ENCODE measurements at regions of chr3 and their contacts with region 1.

Region 1: DNA sequence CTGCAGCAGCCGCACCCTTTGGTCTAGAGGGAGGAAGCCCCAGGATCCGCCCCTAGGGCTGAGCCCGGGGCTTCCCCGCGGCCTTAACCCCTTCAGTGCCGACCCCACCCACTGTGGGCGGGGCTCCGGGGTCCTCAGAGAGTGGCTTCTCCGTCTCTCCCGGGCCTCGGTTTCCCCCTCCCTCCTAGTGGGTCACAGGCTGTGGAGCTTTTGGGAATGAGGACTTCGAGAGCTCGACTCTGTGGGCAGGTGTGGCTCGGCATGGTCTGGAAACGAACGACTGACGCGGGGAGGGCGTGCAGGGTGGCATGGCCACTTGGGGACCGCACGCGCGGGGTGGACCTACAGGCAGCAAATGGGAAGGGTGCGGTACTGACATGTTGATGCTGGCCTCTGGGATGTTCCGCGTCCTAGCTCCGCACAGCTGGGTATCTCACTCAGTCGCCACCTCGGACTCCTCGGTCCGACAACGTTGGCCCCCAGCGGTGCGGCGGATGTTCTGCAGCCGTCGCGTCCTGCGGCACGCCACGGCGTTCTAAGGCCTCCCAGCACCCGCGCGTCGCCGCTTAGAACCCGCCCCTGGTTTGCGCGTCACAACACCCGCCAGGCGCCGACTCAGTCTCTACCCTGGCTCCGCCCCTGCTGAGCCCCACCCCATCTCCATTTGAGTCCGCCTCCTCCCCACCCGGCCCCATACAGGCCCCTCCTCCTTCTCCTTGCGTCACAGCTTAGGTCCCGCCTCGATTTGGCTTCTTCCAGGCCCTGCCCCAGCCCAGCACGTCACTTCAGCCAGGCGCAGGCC is at the starts of genes HYAL3 and NAA80:
- DNase-seq: peak; percentile 100
- H3K4me3 Mint-ChIP-seq: peak within 1 kb of the TSS; percentile 99
- H3K27ac Mint-ChIP-seq: peak within 1 kb of the TSS; percentile 98
- H3K4me1 Mint-ChIP-seq: peaks cover 22% of the 10 kb centered on the region
- H3K27me3 Mint-ChIP-seq: no peaks in the 10 kb centered on the region
- total RNA-seq, gene HYAL3: 7.1 and 7.3 TPM in 2 replicates
- total RNA-seq, gene NAA80: 17.3 and 20.0 TPM in 2 replicates

Region 2: DNA sequence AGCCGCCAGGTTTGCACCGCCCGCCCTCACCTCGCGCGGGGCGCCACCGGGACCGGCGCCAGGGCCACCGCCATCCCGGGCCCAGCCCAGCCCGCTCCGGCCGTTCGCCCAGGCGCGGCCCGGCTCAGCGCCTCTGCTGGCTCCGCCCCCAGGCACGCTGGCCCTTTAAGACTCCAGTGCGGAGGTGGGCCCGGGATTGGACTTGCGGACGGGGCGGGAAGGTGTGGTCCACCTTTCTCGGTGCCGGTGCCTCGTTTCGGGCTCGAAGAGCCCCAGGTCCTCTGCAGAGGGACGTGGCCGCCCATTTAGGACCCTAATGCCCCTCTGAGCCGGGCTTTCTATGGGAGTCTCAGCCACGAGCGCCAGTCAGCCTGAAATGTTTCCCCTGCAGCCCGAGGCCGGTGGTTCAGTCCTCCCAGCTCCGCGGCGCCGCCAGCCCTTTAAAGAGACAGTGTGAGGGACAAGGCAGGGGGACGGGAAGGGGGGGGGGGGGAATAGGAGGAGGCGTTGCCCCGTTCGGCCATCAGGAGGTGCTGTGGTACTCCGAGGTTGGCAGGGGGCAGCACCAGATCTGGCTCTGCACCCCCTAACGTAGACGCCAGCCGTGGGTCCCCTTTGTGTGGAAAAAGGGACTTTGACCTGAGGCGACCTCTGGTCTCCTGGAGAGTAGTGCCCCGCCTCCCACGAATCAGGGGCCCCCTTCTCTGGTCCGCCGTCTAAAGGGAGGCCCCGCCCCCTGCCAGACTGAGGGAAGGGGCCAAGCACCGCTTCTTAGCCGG is 22.5 kb after region 1 on chr3:
- intact Hi-C with region 1: loop called (anchors 1 kb)
- DNase-seq: peak; percentile 96
- H3K4me3 Mint-ChIP-seq: peak overlapping the region; percentile 88
- H3K27ac Mint-ChIP-seq: peak overlapping the region; percentile 92
- H3K4me1 Mint-ChIP-seq: peaks cover 27% of the 10 kb centered on the region
- H3K27me3 Mint-ChIP-seq: no peaks in the 10 kb centered on the region

Region 3: DNA sequence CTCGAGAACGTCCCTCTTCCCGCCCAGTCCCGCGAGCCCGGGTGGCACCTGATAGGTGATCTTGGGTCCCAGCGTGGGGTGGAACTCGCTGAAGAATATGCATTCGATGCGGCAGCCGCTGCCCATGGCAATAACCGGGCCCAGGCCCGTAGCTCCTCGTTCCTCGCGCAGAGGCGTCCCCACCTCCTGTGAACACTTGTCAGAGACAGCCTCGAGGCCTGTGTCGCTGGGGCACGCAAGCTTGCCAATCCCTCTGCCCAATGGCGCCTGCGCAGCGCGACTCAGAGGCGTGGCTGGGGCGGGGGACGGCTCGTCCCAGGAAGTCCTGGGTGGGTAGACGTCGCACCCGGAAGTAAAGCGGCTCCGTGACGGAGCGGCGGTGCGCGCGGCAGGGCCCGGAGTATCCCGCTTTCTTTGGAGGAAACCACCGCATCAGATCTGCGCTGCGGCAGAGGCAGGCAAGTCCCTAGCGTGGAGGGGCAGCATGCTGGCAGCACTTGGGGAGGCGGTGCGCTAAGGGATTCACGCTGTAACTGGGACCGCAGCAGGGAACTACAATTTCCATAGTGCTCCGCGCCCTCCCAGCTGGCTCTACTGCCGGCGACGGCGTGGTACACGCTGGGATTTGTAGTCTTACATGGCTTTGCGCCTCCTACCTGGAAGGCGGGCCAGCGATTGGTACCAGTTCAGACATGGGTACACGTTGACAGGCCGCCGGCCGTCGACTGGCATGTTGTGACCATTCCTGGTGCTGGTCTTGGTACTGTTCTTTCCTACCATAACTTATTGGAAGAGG is 51.7 kb after region 1 on chr3 and contains the starts of genes CYB561D2 and NPRL2:
- intact Hi-C with region 1: loop called (anchors 2 kb)
- DNase-seq: peak; percentile 100
- H3K4me3 Mint-ChIP-seq: peak within 1 kb of the TSS; percentile 95
- H3K27ac Mint-ChIP-seq: peak within 1 kb of the TSS; percentile 97
- H3K4me1 Mint-ChIP-seq: peaks cover 40% of the 10 kb centered on the region
- H3K27me3 Mint-ChIP-seq: no peaks in the 10 kb centered on the region
- total RNA-seq, gene CYB561D2: 23.9 and 27.0 TPM in 2 replicates
- total RNA-seq, gene NPRL2: 38.1 and 43.0 TPM in 2 replicates